HEK293 (cell line): ENCODE measurements at regions of chr11 and their contacts with region 1.

Region 1: GRCh38 chr11:78416305-78417178 is 1.1 kb downstream of the GAB2 start:
- H3K4me3 ChIP-seq: peak overlapping the region; percentile 63
- H3K27ac ChIP-seq: 0 out of 2 replicates have a peak overlapping the region, but pooled peaks have one; percentile 11
- H3K4me1 ChIP-seq: no peaks in the 10 kb centered on the region; the same call in 1 of the 2 replicates
- CTCF ChIP-seq: peak; percentile 54

Region 2: DNA sequence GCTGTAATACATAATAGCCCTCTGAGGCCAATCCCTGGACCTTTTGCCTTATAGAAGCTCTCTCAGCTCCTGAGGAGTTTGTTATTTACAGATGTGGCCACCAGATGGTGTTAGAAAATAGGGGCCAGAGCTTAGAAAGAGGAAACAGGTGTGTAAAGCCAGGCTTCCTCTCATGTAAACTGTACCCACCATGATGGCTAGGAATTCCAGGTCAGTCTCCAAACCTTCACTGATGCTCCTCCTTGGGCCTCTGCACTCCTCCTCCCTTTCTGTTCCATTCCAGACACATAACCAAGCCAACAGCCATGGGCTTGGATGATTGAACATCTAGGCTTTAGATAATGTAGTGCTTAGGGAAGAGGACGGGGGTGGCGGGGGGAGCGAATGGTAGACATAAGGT is 188.1 kb before region 1 on chr11:
- CTCF ChIA-PET with region 1: interaction called, 10 read pairs
- POLR2A ChIA-PET with region 1: interaction called, 8 read pairs
- H3K4me3 ChIP-seq: no peak overlapping the region
- H3K27ac ChIP-seq: no peak overlapping the region
- H3K4me1 ChIP-seq: no peaks in the 10 kb centered on the region
- CTCF ChIP-seq: no peak

Region 3: GRCh38 chr11:78400702-78401101 is 15.8 kb before region 1 on chr11:
- CTCF ChIA-PET with region 1: no interaction called
- POLR2A ChIA-PET with region 1: no interaction called
- H3K4me3 ChIP-seq: no peak overlapping the region
- H3K27ac ChIP-seq: no peak overlapping the region
- H3K4me1 ChIP-seq: no peaks in the 10 kb centered on the region
- CTCF ChIP-seq: no peak

Region 4: GRCh38 chr11:78432058-78432515 is 15.5 kb after region 1 on chr11:
- CTCF ChIA-PET with region 1: interaction called, 41 read pairs
- POLR2A ChIA-PET with region 1: no interaction called
- H3K4me3 ChIP-seq: no peak overlapping the region
- H3K27ac ChIP-seq: no peak overlapping the region
- H3K4me1 ChIP-seq: no peaks in the 10 kb centered on the region
- CTCF ChIP-seq: peak; percentile 38; the same call in 1 of the 2 replicates

Region 5: GRCh38 chr11:78444726-78445125 is 28.2 kb after region 1 on chr11:
- CTCF ChIA-PET with region 1: no interaction called
- POLR2A ChIA-PET with region 1: no interaction called
- H3K4me3 ChIP-seq: no peak overlapping the region
- H3K27ac ChIP-seq: no peak overlapping the region
- H3K4me1 ChIP-seq: no peaks in the 10 kb centered on the region
- CTCF ChIP-seq: no peak

Region 6: DNA sequence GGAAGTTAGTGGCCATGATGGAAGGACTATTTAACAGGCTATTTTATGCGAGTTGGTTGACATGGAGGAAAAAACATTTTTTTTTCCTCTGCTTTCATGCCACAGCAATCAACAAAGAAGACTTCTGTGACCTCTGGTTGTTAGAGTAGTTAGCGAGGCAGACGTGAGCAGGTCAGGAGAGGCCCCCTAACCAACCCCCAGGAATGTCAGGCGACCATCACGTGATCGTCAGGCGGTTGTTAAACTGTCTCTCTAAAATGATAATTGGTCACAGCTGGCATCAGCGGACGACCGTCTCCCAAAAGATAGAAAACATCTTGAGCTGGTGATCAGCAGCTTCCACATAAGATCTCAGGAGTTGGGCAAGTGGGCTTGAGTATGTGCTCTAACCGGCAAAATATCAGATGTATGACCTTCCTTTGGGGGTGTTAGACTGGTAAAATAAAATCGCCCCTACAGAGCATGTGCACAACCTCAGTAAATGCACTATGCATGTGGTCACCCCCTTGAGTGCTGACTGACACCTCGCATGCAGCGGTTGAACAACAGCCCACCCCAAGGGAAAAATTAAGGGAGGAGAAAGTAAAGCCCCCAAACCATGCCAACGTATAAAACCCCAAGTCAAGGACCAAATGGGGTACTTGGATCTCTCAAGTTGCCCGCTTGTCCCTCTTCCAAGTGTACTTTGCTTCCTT is 179.0 kb after region 1 on chr11:
- CTCF ChIA-PET with region 1: no interaction called
- POLR2A ChIA-PET with region 1: no interaction called
- H3K4me3 ChIP-seq: no peak overlapping the region
- H3K27ac ChIP-seq: no peak overlapping the region
- H3K4me1 ChIP-seq: no peaks in the 10 kb centered on the region
- CTCF ChIP-seq: no peak